Naive thymus-derived CD4-positive, alpha-beta T cell (primary cell): ENCODE measurements at regions of chr6 and their contacts with region 1.

Region 1: GRCh38 chr6:27146706-27147505 is 100.6 kb upstream of the PRSS16 start:
- DNase-seq: peak; percentile 71 to 96 (median 92)
- ATAC-seq: peak; percentile 92
- H3K4me3 ChIP-seq: peak overlapping the region; percentile 90
- H3K4me3 Mint-ChIP-seq: no peak overlapping the region
- H3K27ac ChIP-seq: peak overlapping the region; percentile 89
- H3K27ac Mint-ChIP-seq: no peak overlapping the region
- H3K4me1 ChIP-seq: peaks cover 6 to 7% of the 10 kb centered on the region in 2 donors
- H3K4me1 Mint-ChIP-seq: peaks cover 0 to 26% (median 14%) of the 10 kb centered on the region in 7 donors
- H3K27me3 ChIP-seq: no peaks in the 10 kb centered on the region
- H3K27me3 Mint-ChIP-seq: no peaks in the 10 kb centered on the region

Region 2: GRCh38 chr6:26045065-26045927 is 1101.6 kb before region 1 on chr6:
- CTCF ChIA-PET with region 1: no interaction called
- POLR2A ChIA-PET with region 1: interaction called, 35 read pairs
- intact Hi-C with region 1: loop called in 1 of 2 experiments (anchors 1 kb)
- DNase-seq: peak; percentile 39 to 93 (median 89)
- ATAC-seq: peak; percentile 68
- H3K4me3 ChIP-seq: peak overlapping the region; percentile 91
- H3K4me3 Mint-ChIP-seq: peak overlapping the region; percentile 87 to 98 (median 94)
- H3K27ac ChIP-seq: peak overlapping the region; percentile 90
- H3K27ac Mint-ChIP-seq: peak overlapping the region; percentile 80 to 98 (median 95)
- H3K4me1 ChIP-seq: peaks cover 7 to 19% of the 10 kb centered on the region in 2 donors
- H3K4me1 Mint-ChIP-seq: peaks cover 8 to 51% (median 20%) of the 10 kb centered on the region in 7 donors
- H3K27me3 ChIP-seq: no peaks in the 10 kb centered on the region
- H3K27me3 Mint-ChIP-seq: peaks cover 0 to 3% (median 0%) of the 10 kb centered on the region in 5 donors

Region 3: DNA sequence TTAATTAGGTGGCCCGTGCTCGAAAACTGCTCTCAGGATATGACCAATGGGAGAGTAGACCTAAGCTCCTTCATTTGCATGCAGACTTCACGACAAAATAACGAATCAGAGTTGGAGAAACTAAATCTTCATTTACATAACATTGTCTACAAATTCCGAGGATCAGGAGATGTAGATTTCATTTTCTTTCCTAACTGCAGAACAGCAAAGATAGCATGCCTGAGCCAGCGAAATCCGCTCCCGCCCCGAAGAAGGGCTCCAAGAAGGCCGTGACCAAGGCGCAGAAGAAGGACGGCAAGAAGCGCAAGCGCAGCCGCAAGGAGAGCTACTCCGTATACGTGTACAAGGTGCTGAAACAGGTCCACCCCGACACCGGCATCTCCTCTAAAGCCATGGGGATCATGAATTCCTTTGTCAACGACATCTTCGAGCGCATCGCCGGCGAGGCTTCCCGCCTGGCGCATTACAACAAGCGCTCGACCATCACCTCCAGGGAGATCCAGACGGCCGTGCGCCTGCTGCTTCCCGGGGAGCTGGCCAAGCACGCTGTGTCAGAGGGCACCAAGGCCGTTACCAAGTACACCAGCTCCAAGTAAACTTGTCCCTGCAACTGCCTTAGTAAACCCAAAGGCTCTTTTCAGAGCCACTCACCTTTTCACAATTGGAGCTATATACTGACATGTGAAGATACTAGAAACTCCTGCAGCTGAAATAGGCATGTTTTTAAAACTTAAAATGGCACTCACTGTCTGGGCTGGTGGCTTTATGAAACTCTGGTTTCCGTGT is 963.1 kb before region 1 on chr6:
- CTCF ChIA-PET with region 1: no interaction called
- POLR2A ChIA-PET with region 1: interaction called, 18 read pairs
- intact Hi-C with region 1: no loop called
- DNase-seq: peak; percentile 43 to 83 (median 77)
- ATAC-seq: peak; percentile 91
- H3K4me3 ChIP-seq: peak overlapping the region; percentile 82
- H3K4me3 Mint-ChIP-seq: peak overlapping the region; percentile 84 to 99 (median 98)
- H3K27ac ChIP-seq: peak overlapping the region; percentile 76
- H3K27ac Mint-ChIP-seq: peak overlapping the region; percentile 83 to 99 (median 90)
- H3K4me1 ChIP-seq: peaks cover 13 to 30% of the 10 kb centered on the region in 2 donors
- H3K4me1 Mint-ChIP-seq: peaks cover 19 to 59% (median 49%) of the 10 kb centered on the region in 7 donors
- H3K27me3 ChIP-seq: no peaks in the 10 kb centered on the region
- H3K27me3 Mint-ChIP-seq: no peaks in the 10 kb centered on the region

Region 4: DNA sequence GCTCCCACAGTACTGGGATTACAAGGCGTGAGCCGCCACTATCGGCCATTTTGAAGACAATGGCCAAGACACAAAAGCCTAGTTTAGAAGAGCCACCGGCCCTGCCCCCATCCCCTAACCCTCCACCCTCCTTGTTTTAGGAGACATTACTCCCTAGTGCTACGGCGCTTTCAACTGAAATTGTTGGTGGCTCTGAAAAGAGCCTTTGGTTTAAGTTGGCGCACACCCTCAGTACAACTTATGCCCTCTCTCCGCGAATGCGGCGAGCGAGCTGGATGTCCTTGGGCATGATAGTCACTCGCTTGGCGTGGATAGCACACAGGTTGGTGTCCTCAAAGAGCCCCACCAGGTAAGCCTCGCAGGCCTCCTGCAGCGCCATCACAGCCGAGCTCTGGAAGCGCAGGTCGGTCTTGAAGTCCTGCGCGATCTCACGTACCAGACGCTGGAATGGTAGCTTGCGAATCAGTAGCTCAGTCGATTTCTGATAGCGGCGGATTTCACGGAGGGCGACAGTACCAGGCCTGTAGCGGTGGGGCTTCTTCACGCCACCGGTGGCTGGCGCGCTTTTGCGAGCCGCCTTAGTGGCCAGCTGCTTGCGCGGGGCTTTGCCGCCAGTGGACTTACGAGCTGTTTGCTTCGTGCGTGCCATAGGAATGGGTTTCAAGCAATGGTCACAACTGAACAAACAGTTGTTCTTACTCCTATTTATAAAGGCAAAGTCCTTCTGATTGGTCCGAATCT is 896.8 kb before region 1 on chr6:
- CTCF ChIA-PET with region 1: no interaction called
- POLR2A ChIA-PET with region 1: interaction called, 18 read pairs
- intact Hi-C with region 1: no loop called
- DNase-seq: peak; percentile 53 to 85 (median 80)
- ATAC-seq: peak; percentile 85
- H3K4me3 ChIP-seq: peak overlapping the region; percentile 84
- H3K4me3 Mint-ChIP-seq: peak overlapping the region; percentile 88 to 100 (median 96)
- H3K27ac ChIP-seq: peak overlapping the region; percentile 71
- H3K27ac Mint-ChIP-seq: peak overlapping the region; percentile 85 to 97 (median 94)
- H3K4me1 ChIP-seq: peaks cover 4 to 19% of the 10 kb centered on the region in 2 donors
- H3K4me1 Mint-ChIP-seq: peaks cover 20 to 48% (median 39%) of the 10 kb centered on the region in 7 donors
- H3K27me3 ChIP-seq: no peaks in the 10 kb centered on the region
- H3K27me3 Mint-ChIP-seq: no peaks in the 10 kb centered on the region

Region 5: GRCh38 chr6:27177485-27178406 is 30.8 kb after region 1 on chr6:
- CTCF ChIA-PET with region 1: no interaction called
- POLR2A ChIA-PET with region 1: interaction called, 26 read pairs
- intact Hi-C with region 1: loop called in 1 of 2 experiments (anchors 1 kb)
- DNase-seq: peak; percentile 49 to 78 (median 66)
- ATAC-seq: peak; percentile 83
- H3K4me3 ChIP-seq: peak overlapping the region; percentile 99
- H3K4me3 Mint-ChIP-seq: peak overlapping the region; percentile 90 to 98 (median 96)
- H3K27ac ChIP-seq: peak overlapping the region; percentile 74
- H3K27ac Mint-ChIP-seq: peak overlapping the region; percentile 79 to 100 (median 95)
- H3K4me1 ChIP-seq: peaks cover 0 to 3% of the 10 kb centered on the region in 2 donors
- H3K4me1 Mint-ChIP-seq: peaks cover 0 to 33% (median 14%) of the 10 kb centered on the region in 7 donors
- H3K27me3 ChIP-seq: no peaks in the 10 kb centered on the region
- H3K27me3 Mint-ChIP-seq: peaks cover 0 to 37% (median 0%) of the 10 kb centered on the region in 5 donors

Region 6: DNA sequence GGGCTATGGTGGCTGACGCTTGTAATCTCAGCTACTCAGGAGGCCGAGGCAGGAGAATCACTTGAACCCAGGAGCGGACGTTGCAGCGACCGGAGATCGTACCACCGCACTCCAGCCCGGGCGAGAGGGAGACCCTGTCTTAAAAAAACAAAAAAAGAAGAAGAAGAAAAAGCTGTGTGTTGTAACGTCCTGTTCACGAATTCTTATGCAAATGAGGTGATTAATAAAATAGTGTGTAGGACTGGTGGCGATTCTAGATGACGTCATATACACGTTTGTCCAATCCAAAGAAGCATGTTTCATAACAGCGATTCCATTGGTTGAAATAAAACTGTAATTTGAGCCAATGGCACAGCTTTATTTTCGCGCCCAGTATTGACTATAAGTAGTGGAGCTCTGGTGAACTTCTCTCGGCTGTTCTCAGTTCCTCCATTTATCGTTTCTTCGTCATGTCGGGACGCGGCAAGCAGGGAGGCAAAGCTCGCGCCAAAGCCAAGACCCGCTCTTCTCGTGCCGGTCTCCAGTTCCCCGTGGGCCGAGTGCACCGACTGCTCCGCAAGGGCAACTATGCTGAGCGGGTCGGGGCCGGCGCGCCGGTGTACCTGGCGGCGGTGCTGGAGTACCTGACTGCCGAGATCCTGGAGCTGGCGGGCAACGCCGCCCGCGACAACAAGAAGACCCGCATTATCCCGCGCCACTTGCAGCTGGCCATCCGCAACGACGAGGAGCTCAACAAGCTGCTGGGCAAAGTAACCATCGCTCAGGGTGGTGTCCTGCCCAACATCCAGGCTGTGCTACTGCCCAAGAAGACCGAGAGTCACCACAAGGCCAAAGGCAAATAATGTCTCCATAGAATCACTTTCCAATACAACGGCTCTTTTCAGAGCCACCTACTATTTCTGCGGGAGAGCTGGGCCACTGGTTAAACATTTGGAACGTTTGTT is 718.3 kb after region 1 on chr6:
- CTCF ChIA-PET with region 1: no interaction called
- POLR2A ChIA-PET with region 1: interaction called, 160 read pairs
- intact Hi-C with region 1: no loop called
- DNase-seq: peak; percentile 56 to 93 (median 89)
- ATAC-seq: peak; percentile 85
- H3K4me3 ChIP-seq: peak overlapping the region; percentile 74
- H3K4me3 Mint-ChIP-seq: peak overlapping the region; percentile 85 to 99 (median 97)
- H3K27ac ChIP-seq: peak overlapping the region; percentile 71
- H3K27ac Mint-ChIP-seq: peak overlapping the region; percentile 88 to 98 (median 95)
- H3K4me1 ChIP-seq: peaks cover 8 to 25% of the 10 kb centered on the region in 2 donors
- H3K4me1 Mint-ChIP-seq: peaks cover 22 to 64% (median 46%) of the 10 kb centered on the region in 7 donors
- H3K27me3 ChIP-seq: no peaks in the 10 kb centered on the region
- H3K27me3 Mint-ChIP-seq: peaks cover 0 to 16% (median 0%) of the 10 kb centered on the region in 5 donors